ENCODE measurements at regions of chr9 and their contacts with region 1.

Region 1: GRCh38 chr9:128771745-128772519 is at the start of gene ZER1:
- DNase-seq: peak; percentile 92 to 96
- H3K4me3 ChIP-seq: peak within 1 kb of the TSS; percentile 84
- H3K4me3 Mint-ChIP-seq: peak within 1 kb of the TSS; percentile 97
- H3K27ac Mint-ChIP-seq: peak within 1 kb of the TSS; percentile 90
- H3K4me1 ChIP-seq: peaks cover 5% of the 10 kb centered on the region; the same call in 1 of the 2 replicates
- H3K4me1 Mint-ChIP-seq: peaks cover 10% of the 10 kb centered on the region
- H3K27me3 ChIP-seq: no peaks in the 10 kb centered on the region
- H3K27me3 Mint-ChIP-seq: no peaks in the 10 kb centered on the region
- CTCF ChIP-seq: no peak
- total RNA-seq, gene ZER1: 21.7 and 28.6 TPM in 2 replicates

Region 2: DNA sequence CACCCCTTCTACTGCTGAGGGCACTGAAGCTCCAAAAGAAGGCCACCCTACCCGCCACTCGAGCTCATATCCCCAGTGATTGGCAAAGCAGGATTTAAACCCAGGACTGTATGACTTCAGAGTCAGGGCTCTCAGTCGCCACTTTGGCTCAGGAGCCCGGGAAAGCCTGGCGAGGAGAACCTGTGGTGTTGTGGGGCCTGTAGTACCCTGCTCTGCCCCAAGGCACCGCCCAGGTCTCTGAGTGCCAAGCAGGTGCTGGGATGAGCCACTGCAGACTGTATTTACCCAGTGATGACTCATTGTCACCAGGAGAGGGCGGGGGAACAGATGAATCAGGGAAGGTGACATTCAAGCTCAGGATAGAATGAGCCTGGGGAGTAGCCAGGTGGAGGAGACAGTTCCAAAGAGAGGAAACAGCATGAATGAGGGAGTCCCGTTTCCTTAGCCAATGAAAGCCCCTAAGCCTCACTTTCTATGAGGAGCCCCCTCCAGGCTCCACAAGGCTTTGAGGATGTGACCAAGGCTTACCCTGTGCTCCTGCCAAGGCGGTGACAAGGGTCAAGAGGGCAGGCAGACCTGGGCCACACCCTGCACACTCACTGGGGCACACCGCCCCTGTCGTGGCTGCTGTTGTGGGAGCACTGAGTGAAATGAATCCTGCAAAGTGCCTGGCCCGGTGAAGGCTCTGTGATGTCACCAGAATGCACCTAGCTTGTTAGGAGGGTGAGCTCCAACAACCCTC is 816.5 kb before region 1 on chr9:
- CTCF ChIA-PET with region 1: no interaction called
- POLR2A ChIA-PET with region 1: no interaction called
- intact Hi-C with region 1: no loop called
- DNase-seq: peak; percentile 86 to 90
- H3K4me3 ChIP-seq: no peak overlapping the region
- H3K4me3 Mint-ChIP-seq: peak overlapping the region; percentile 58
- H3K27ac Mint-ChIP-seq: peak overlapping the region; percentile 82
- H3K4me1 ChIP-seq: peaks cover 29% of the 10 kb centered on the region
- H3K4me1 Mint-ChIP-seq: peaks cover 12% of the 10 kb centered on the region
- H3K27me3 ChIP-seq: no peaks in the 10 kb centered on the region
- H3K27me3 Mint-ChIP-seq: no peaks in the 10 kb centered on the region
- CTCF ChIP-seq: peak; percentile 64 to 75

Region 3: DNA sequence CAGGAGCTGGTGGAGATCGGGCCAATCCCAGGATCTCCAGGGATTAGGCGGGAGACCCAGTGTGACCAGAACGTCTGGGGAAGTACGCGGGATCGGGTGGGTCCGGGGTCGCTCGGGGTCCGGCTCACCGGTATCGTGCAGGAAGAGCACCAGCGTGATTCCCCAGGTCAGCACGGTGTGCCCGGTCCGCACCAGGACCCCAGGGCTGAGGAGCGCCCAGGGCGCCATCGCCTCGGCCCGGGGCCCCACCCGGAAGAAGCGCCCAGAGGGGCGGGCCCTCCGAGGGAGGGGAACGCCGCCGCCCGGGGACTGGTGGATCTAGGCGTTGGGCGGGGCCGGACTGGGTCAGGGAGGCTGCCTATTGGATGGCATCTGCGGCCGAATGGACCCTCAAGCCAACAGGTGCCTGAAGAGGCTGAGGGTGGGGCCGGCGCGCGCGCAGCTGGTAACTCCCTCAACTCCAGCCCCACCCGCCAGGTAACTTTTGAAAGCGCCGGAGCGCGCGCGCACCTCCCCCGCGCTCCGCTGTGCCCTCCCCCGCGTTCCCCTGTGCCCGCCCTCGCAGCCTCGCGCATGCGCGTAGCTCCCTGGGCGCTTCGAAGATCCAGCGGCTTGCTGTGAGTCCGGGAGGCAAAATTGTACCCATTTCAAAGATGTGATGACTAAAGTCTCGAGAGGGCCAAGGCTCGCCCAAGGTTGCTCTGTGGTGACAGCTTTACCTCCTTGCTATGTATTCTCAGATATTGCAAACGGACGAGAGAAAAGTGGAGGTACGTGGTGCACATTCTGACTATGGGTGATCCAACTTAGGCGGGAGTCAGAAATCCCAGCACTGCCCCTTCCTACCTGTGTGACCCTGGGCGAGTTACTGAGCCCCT is 47.8 kb before region 1 on chr9 and contains the start of gene ZDHHC12:
- CTCF ChIA-PET with region 1: interaction called, 5 read pairs
- POLR2A ChIA-PET with region 1: interaction called, 5 read pairs
- intact Hi-C with region 1: loop called (anchors 2 kb)
- DNase-seq: peak; percentile 99 to 100
- H3K4me3 ChIP-seq: peak within 1 kb of the TSS; percentile 81
- H3K4me3 Mint-ChIP-seq: peak within 1 kb of the TSS; percentile 95
- H3K27ac Mint-ChIP-seq: peak within 1 kb of the TSS; percentile 75
- H3K4me1 ChIP-seq: no peaks in the 10 kb centered on the region
- H3K4me1 Mint-ChIP-seq: peaks cover 15% of the 10 kb centered on the region
- H3K27me3 ChIP-seq: no peaks in the 10 kb centered on the region
- H3K27me3 Mint-ChIP-seq: no peaks in the 10 kb centered on the region
- CTCF ChIP-seq: no peak
- total RNA-seq, gene ZDHHC12: 71.0 and 73.7 TPM in 2 replicates

Region 4: GRCh38 chr9:128786681-128787601 is 15.0 kb after region 1 on chr9 and contains the start of gene TBC1D13:
- CTCF ChIA-PET with region 1: no interaction called
- POLR2A ChIA-PET with region 1: no interaction called
- intact Hi-C with region 1: loop called (anchors 1 kb)
- DNase-seq: peak; percentile 94 to 95
- H3K4me3 ChIP-seq: peak within 1 kb of the TSS; percentile 94
- H3K4me3 Mint-ChIP-seq: peak within 1 kb of the TSS; percentile 97
- H3K27ac Mint-ChIP-seq: peak within 1 kb of the TSS; percentile 90
- H3K4me1 ChIP-seq: peaks cover 6% of the 10 kb centered on the region; the same call in 1 of the 2 replicates
- H3K4me1 Mint-ChIP-seq: no peaks in the 10 kb centered on the region
- H3K27me3 ChIP-seq: no peaks in the 10 kb centered on the region
- H3K27me3 Mint-ChIP-seq: no peaks in the 10 kb centered on the region
- CTCF ChIP-seq: no peak
- total RNA-seq, gene TBC1D13: 35.6 and 39.9 TPM in 2 replicates

Region 5: DNA sequence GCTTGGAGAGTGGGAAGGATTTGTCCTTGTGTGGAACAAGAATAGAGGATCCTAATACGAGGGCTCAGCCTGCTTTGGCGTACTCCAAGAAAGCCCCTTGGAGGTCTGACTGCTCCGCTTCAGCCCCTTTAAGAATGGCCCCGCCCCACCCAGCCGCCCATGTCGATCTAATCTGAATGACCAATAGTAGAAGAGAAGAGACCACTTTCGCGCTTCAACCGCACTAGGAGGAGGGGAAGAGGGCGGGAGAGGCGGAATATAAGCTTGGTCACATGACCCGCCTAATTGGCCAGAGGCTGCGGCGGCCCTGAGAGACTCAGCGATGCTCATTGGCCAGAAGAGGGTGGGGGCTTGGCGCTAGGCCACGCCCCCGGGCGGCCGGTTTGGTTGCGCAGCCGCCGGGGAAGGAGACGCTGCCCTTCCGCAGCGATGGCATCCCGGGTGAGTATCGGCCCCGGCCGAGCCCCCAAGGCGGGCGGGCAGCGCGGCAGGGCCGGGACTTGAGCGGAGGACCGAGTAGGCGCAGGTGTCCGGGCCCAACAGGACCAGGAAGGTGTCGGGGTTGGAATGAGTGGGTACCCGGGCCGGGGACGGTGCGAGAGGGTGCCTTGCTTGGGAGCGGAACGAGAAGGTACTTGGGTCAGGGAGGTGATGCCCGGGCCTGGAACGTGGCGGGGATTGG is 264.4 kb after region 1 on chr9 and contains the start of gene MIGA2:
- CTCF ChIA-PET with region 1: no interaction called
- POLR2A ChIA-PET with region 1: no interaction called
- intact Hi-C with region 1: no loop called
- DNase-seq: peak; percentile 97 to 99
- H3K4me3 ChIP-seq: peak within 1 kb of the TSS; percentile 94
- H3K4me3 Mint-ChIP-seq: peak within 1 kb of the TSS; percentile 80
- H3K27ac Mint-ChIP-seq: peak within 1 kb of the TSS; percentile 72
- H3K4me1 ChIP-seq: peaks cover 11% of the 10 kb centered on the region; the same call in 1 of the 2 replicates
- H3K4me1 Mint-ChIP-seq: peaks cover 9% of the 10 kb centered on the region
- H3K27me3 ChIP-seq: no peaks in the 10 kb centered on the region
- H3K27me3 Mint-ChIP-seq: no peaks in the 10 kb centered on the region
- CTCF ChIP-seq: no peak
- total RNA-seq, gene MIGA2: 25.1 and 34.8 TPM in 2 replicates

Measured in Caco-2 (cell line).